Mammary epithelial cell (primary cell): ENCODE measurements at regions of chr7 and their contacts with region 1.

Region 1: GRCh38 chr7:105429746-105430612 is 41.3 kb upstream of the SRPK2 start:
- DNase-seq: peak; percentile 39
- H3K4me3 ChIP-seq: no peak overlapping the region
- H3K27ac ChIP-seq: no peak overlapping the region
- H3K4me1 ChIP-seq: no peaks in the 10 kb centered on the region
- H3K27me3 ChIP-seq: no peaks in the 10 kb centered on the region
- CTCF ChIP-seq: peak; percentile 57 to 66

Region 2: GRCh38 chr7:105377926-105378325 is 52.1 kb before region 1 on chr7:
- CTCF ChIA-PET with region 1: no interaction called
- dilution Hi-C with region 1: no loop called
- in situ Hi-C with region 1: no loop called
- intact Hi-C with region 1: no loop called
- DNase-seq: no peak
- H3K4me3 ChIP-seq: no peak overlapping the region
- H3K27ac ChIP-seq: no peak overlapping the region
- H3K4me1 ChIP-seq: no peaks in the 10 kb centered on the region
- H3K27me3 ChIP-seq: no peaks in the 10 kb centered on the region
- CTCF ChIP-seq: no peak

Region 3: GRCh38 chr7:105461518-105461917 is 31.5 kb after region 1 on chr7:
- CTCF ChIA-PET with region 1: no interaction called
- dilution Hi-C with region 1: no loop called
- in situ Hi-C with region 1: no loop called
- intact Hi-C with region 1: no loop called
- DNase-seq: peak; percentile 9
- H3K4me3 ChIP-seq: no peak overlapping the region
- H3K27ac ChIP-seq: no peak overlapping the region
- H3K4me1 ChIP-seq: no peaks in the 10 kb centered on the region
- H3K27me3 ChIP-seq: no peaks in the 10 kb centered on the region
- CTCF ChIP-seq: no peak

Region 4: GRCh38 chr7:105487579-105488571 is 57.9 kb after region 1 on chr7:
- CTCF ChIA-PET with region 1: no interaction called
- dilution Hi-C with region 1: no loop called
- in situ Hi-C with region 1: no loop called
- intact Hi-C with region 1: loop called (anchors 1 kb)
- DNase-seq: peak; percentile 41
- H3K4me3 ChIP-seq: no peak overlapping the region
- H3K27ac ChIP-seq: no peak overlapping the region
- H3K4me1 ChIP-seq: peaks cover 6% of the 10 kb centered on the region
- H3K27me3 ChIP-seq: no peaks in the 10 kb centered on the region
- CTCF ChIP-seq: peak; percentile 25 to 58